ACHN (cell line): ENCODE measurements at regions of chr12 and their contacts with region 1.

Region 1: GRCh38 chr12:117202556-117202955 is 12.3 kb upstream of the FBXO21 start:
- DNase-seq: no peak

Region 2: GRCh38 chr12:117857632-117858612 is 655.4 kb after region 1 on chr12:
- in situ Hi-C with region 1: loop called (anchors 10 kb)
- DNase-seq: peak; percentile 76